Activated naive CD4-positive, alpha-beta T cell treated with anti-CD3 and anti-CD28 coated beads for 36 hours (primary cell): ENCODE measurements at regions of chr1 and their contacts with region 1.

Region 1: GRCh38 chr1:89310505-89310904 is 37.8 kb upstream of the GBP5 start:
- DNase-seq: no peak
- H3K4me3 Mint-ChIP-seq: no peak overlapping the region
- H3K27ac Mint-ChIP-seq: peak overlapping the region; percentile 86
- H3K4me1 Mint-ChIP-seq: peaks cover 49% of the 10 kb centered on the region
- H3K27me3 Mint-ChIP-seq: no peaks in the 10 kb centered on the region

Region 2: GRCh38 chr1:89286549-89287180 is 23.8 kb before region 1 on chr1:
- CTCF ChIA-PET with region 1: interaction called, 7 read pairs
- intact Hi-C with region 1: loop called (anchors 1 kb)
- DNase-seq: no peak
- H3K4me3 Mint-ChIP-seq: no peak overlapping the region
- H3K27ac Mint-ChIP-seq: peak overlapping the region; percentile 52
- H3K4me1 Mint-ChIP-seq: peaks cover 69% of the 10 kb centered on the region
- H3K27me3 Mint-ChIP-seq: no peaks in the 10 kb centered on the region

Region 3: GRCh38 chr1:89641781-89642180 is 331.3 kb after region 1 on chr1:
- CTCF ChIA-PET with region 1: no interaction called
- intact Hi-C with region 1: no loop called
- DNase-seq: no peak
- H3K4me3 Mint-ChIP-seq: no peak overlapping the region
- H3K27ac Mint-ChIP-seq: peak overlapping the region; percentile 76
- H3K4me1 Mint-ChIP-seq: peaks cover 69% of the 10 kb centered on the region
- H3K27me3 Mint-ChIP-seq: no peaks in the 10 kb centered on the region

Region 4: DNA sequence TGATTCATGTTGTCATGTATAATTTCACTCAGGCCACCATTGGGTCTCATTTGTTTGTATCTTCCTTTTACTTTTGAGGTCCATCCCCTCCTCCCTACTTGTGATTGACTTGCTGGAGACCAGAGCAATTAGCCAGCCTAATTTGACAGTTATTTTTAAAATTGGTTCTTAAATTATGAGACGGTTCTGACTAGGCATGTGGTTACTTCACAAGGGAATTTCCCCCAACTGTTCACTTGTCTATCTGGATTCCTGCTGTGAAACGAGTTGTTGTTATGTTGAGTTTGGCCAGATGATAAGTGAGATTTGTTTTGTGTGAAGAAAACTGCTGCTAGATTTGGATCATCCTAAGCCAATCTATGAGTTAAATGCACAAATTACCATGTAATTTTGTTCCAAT is 1047.5 kb after region 1 on chr1:
- CTCF ChIA-PET with region 1: no interaction called
- intact Hi-C with region 1: no loop called
- DNase-seq: no peak
- H3K4me3 Mint-ChIP-seq: no peak overlapping the region
- H3K27ac Mint-ChIP-seq: no peak overlapping the region
- H3K4me1 Mint-ChIP-seq: no peaks in the 10 kb centered on the region
- H3K27me3 Mint-ChIP-seq: peaks cover 5% of the 10 kb centered on the region